ENCODE measurements at regions of chr4 and their contacts with region 1.

Region 1: GRCh38 chr4:73311428-73311827 is 52.8 kb upstream of the ANKRD17 start:
- DNase-seq: no peak
- H3K4me3 ChIP-seq: no peak overlapping the region
- H3K27ac ChIP-seq: no peak overlapping the region
- H3K4me1 ChIP-seq: no peaks in the 10 kb centered on the region
- H3K27me3 ChIP-seq: no peaks in the 10 kb centered on the region
- CTCF ChIP-seq: peak in 3 of 4 experiments; percentile 33 to 46 (median 40)
- POLR2A ChIP-seq: no peak

Region 2: GRCh38 chr4:73251384-73251783 is 60.0 kb before region 1 on chr4:
- intact Hi-C with region 1: no loop called
- DNase-seq: no peak
- H3K4me3 ChIP-seq: no peak overlapping the region
- H3K27ac ChIP-seq: no peak overlapping the region
- H3K4me1 ChIP-seq: no peaks in the 10 kb centered on the region
- H3K27me3 ChIP-seq: no peaks in the 10 kb centered on the region
- CTCF ChIP-seq: no peak
- POLR2A ChIP-seq: no peak

Region 3: GRCh38 chr4:73653695-73654106 is 342.3 kb after region 1 on chr4:
- intact Hi-C with region 1: loop called (anchors 5 kb)
- DNase-seq: peak; percentile 83
- H3K4me3 ChIP-seq: no peak overlapping the region
- H3K27ac ChIP-seq: peak overlapping the region in 1 of 2 donors; percentile 13
- H3K4me1 ChIP-seq: peaks cover 6% of the 10 kb centered on the region
- H3K27me3 ChIP-seq: no peaks in the 10 kb centered on the region
- CTCF ChIP-seq: peak; percentile 58 to 82 (median 67)
- POLR2A ChIP-seq: no peak

Region 4: DNA sequence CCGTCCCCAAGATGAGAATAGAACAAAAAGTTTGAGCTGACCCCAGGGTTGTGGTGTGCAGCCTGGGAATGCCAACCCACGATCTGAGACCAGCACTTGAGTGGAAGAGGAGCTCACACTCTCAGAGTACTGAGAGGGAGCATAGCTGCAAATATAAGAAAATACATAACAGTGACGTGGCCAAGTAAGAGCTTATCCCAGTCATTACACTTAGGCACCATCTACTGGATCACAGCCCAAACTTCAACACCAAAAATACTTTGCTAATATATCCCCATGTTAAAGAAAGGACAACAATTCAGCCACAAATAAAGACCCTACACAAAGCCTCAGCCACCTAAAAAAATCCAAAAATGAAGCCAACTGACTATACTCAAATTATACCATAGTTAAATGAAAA is 491.8 kb after region 1 on chr4:
- intact Hi-C with region 1: no loop called
- DNase-seq: no peak
- H3K4me3 ChIP-seq: no peak overlapping the region
- H3K27ac ChIP-seq: no peak overlapping the region
- H3K4me1 ChIP-seq: no peaks in the 10 kb centered on the region
- H3K27me3 ChIP-seq: no peaks in the 10 kb centered on the region
- CTCF ChIP-seq: no peak
- POLR2A ChIP-seq: no peak

Measured in prostate gland (tissue), 2 donors.